HEK293T (cell line): ENCODE measurements at regions of chr22 and their contacts with region 1.

Region 1: GRCh38 chr22:28882878-28883656 is at the start of gene ZNRF3:
- DNase-seq: peak; percentile 99

Region 2: GRCh38 chr22:28570691-28571373 is 312.2 kb before region 1 on chr22:
- CTCF ChIA-PET with region 1: no interaction called
- POLR2A ChIA-PET with region 1: no interaction called
- DNase-seq: no peak

Region 3: DNA sequence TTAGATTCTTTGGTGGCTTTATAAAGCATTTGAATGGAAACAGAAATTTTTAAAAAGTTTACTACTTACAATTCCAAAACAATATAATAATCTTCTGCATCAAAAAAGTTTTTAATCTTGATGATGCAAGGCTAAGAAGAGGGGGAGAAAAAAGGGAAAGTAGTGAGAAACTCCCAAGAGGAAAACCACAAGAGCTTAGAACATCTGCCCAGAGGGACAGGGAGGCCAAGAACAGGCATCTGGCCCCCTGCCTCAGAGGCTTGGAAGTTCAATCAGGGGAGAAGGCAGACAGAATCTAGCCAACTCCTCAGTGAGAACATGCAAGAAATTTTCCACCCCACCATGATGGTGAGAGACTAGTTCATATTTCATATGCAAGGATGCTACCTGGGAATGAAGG is 179.6 kb before region 1 on chr22:
- CTCF ChIA-PET with region 1: no interaction called
- POLR2A ChIA-PET with region 1: no interaction called
- DNase-seq: no peak

Region 4: DNA sequence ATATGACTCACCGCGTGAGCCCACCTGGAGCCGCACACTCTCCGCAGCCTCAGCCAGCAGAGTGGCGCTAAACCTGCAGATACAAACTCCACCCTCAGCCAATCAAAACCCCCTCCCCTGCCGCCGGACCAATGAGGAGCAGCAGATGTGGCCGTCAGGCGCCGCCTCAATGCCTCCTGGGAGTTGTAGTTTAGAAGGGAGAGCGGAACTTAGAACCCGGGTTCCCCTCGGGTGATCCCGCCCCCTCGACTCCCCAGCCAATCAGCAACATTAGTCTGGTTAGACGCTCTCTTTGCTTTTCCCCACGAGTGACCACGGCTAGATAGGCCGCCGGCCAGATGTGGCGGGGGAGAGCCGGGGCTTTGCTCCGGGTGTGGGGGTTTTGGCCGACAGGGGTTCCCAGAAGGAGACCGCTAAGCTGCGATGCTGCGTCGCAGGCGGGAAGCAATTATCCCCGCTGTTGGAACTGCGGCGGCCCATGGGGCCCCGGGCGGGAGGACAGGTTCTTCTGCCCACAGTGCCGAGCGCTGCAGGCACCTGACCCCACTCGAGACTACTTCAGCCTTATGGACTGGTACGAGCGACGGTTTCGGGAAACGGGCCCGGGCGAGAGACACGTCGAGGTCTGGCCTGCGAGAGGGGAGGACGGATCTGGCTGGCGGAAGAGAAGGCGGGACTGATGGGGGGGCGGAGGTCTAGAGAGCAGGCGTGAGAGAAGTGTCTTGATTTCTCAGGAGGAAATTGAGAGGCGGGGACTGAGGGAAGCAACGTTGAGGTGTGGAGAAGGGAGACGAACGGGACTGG is 141.1 kb before region 1 on chr22 and contains the starts of genes CHEK2 and HSCB:
- CTCF ChIA-PET with region 1: interaction called, 11 read pairs
- POLR2A ChIA-PET with region 1: no interaction called
- DNase-seq: peak; percentile 99

Region 5: DNA sequence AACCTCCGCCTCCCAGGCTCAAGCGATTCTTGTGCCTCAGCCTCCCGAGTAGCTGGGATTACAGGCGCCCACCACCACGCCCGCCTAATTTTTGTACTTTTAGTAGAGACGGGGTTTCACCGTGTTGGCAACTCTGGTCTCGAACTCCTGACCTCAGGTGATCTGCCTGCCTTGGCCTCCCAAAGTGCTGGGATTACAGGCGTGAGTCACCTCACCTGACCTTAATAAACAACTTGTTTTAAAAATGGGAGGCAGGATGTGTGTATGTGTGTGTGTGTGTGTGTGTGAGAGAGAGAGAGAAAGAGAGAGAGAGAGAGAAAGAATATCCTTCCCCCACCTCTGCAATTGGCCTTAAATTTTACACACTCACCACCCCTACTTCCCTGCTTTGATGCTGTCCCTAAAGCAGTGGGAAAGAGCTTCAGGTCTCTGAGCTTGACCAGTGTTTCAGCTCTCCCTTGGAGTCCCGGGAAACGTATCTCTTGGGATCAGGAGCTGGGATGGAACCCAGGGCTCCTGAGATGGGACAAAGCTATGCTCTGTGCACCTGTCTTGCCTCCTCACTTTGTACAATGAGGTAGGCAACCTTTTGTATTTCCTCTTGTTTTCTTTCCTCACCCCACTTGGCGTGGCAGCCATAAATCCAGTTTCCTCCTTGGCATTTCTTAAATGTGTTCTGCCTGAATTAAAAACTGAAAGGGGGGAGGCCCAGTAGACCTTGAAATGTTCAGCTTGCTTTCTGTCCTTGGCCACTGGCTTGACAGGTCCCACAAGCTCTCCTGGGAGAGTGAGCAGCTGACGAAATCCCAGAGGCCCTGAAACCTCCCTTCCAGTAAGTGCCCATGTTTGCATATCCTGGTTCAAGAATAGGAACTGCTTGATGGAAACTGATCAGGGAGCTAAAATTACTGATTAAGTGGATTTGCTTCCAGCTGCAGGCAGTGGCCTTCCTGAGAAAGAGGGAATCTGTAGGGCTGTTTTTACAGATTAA is 64.9 kb before region 1 on chr22:
- CTCF ChIA-PET with region 1: no interaction called
- POLR2A ChIA-PET with region 1: no interaction called
- DNase-seq: no peak

Region 6: GRCh38 chr22:28917747-28918549 is 34.9 kb after region 1 on chr22:
- CTCF ChIA-PET with region 1: no interaction called
- POLR2A ChIA-PET with region 1: interaction called, 10 read pairs
- DNase-seq: no peak

Region 7: GRCh38 chr22:29040385-29041275 is 157.6 kb after region 1 on chr22:
- CTCF ChIA-PET with region 1: interaction called, 18 read pairs
- POLR2A ChIA-PET with region 1: no interaction called
- DNase-seq: peak; percentile 77